ENCODE measurements at regions of chr10 and their contacts with region 1.

Region 1: DNA sequence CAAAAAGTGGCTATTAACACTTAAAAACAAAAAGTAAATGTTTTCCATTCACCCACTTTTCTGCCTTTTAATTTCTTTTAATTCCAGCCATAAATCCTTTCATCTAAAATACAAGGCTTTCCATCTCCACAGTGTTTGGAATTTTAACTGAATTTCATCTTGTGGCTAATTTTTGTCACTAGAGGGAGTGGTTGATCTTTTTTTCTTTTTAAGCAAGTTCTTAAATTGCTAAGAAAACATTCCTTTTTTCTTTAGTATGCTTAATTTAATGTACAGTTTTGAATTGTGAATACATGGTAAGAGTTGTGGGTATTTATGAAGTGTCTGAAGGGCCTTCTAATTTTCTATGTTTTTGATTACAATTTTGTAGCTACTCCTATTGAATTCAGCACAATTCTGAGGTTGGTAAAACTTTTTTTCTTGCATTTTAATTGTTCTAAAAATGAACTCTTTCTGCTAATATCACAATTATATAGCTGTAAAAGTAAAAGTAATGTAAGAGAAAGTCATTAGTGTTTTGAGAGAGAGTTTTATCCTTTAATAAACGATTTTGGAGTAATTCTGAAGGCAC is 54.9 kb upstream of the ANK3 start:
- DNase-seq: peak; percentile 90
- ATAC-seq: no peak
- H3K4me3 ChIP-seq: no peak overlapping the region
- H3K27ac ChIP-seq: no peak overlapping the region
- H3K4me1 ChIP-seq: peaks cover 50% of the 10 kb centered on the region
- H3K27me3 ChIP-seq: no peaks in the 10 kb centered on the region
- CTCF ChIP-seq: peak; percentile 99

Region 2: DNA sequence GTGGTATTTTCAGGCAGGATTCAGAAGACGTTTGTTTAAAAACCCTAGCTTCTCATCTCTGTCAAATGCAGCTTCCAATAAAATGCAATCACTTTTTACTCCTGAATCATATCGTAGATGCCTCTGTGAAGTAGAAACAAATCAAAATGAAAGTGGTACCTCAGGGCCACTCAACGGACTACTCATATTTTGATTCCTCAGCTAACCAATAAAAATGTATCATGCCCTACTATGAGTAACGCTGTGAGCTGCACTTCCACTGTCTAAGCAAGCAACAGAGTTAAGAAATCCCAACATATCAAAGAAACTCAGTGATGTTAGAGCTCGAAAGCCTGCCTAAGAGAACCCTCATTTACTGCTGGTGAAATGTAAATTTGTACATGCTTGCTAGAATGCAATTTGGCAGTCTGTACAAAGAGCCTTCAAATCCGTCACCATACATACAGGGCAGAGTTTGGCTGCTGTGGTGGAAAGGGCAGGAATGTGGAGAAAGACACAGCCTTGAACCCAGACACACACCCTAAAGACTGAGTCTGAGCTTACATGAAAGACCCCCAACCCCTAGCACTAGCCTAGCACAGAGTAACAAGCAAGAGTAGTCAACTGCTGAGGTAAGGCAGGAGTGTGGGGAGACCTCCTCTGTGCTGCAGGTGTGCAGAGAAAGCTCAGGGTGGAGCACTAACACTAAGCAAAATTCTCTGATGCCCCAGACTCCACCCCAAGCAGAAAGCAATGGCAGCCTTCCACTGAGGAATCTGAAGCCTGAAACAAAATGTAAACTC is 206.4 kb before region 1 on chr10:
- CTCF ChIA-PET with region 1: no interaction called
- POLR2A ChIA-PET with region 1: no interaction called
- intact Hi-C with region 1: loop called (anchors 1 kb)
- DNase-seq: peak; percentile 89
- ATAC-seq: peak; percentile 99
- H3K4me3 ChIP-seq: peak overlapping the region; percentile 66
- H3K27ac ChIP-seq: 0 out of 2 replicates have a peak overlapping the region, but pooled peaks have one; percentile 3
- H3K4me1 ChIP-seq: peaks cover 25% of the 10 kb centered on the region
- H3K27me3 ChIP-seq: no peaks in the 10 kb centered on the region
- CTCF ChIP-seq: peak; percentile 96

Region 3: DNA sequence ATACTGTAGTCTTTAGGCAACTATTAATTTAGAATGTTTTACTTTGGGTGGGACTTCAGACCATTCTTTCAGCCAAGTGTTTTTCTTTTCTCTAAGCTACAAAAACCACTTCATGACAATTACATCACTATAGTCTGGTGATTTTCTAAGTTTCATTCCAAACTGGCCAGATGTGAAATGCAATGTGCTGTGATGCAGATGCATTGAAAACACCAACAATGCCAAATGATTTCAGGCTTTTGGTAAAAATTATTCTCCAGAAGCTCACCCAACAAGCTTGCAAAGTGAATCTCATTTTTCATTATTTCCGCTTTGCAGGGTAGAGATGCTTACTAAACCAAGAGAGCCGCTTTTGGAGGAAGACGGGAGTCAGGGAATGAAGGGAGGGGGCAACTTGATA is 63.5 kb after region 1 on chr10:
- CTCF ChIA-PET with region 1: interaction called, 14 read pairs
- POLR2A ChIA-PET with region 1: no interaction called
- intact Hi-C with region 1: no loop called
- DNase-seq: no peak
- ATAC-seq: no peak
- H3K4me3 ChIP-seq: no peak overlapping the region
- H3K27ac ChIP-seq: no peak overlapping the region
- H3K4me1 ChIP-seq: no peaks in the 10 kb centered on the region
- H3K27me3 ChIP-seq: no peaks in the 10 kb centered on the region
- CTCF ChIP-seq: no peak

Region 4: GRCh38 chr10:60549686-60550085 is 105.1 kb after region 1 on chr10:
- CTCF ChIA-PET with region 1: interaction called, 4 read pairs
- POLR2A ChIA-PET with region 1: no interaction called
- intact Hi-C with region 1: loop called (anchors 1 kb)
- DNase-seq: peak; percentile 89
- ATAC-seq: peak; percentile 99
- H3K4me3 ChIP-seq: no peak overlapping the region
- H3K27ac ChIP-seq: no peak overlapping the region
- H3K4me1 ChIP-seq: no peaks in the 10 kb centered on the region
- H3K27me3 ChIP-seq: no peaks in the 10 kb centered on the region
- CTCF ChIP-seq: peak; percentile 97

Region 5: DNA sequence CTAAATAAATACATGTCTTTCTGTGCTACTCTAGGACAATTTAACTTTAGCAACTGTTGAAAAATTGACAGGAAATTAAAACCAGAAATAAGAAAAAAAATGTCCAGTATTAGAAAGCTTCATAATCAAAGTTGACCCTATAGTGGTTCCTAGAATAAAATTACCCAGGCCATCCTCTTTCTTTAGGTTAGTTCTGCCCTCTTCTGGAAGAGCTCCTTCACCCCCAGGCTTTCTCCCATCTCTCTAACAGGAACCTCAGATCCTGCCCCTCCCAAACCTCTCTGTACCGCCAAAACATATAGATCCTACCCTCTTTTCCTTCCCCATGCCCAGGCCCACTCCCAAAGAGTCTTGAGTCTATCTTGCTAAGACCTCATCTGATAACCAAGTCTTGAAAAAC is 174.3 kb after region 1 on chr10:
- CTCF ChIA-PET with region 1: interaction called, 8 read pairs
- POLR2A ChIA-PET with region 1: no interaction called
- intact Hi-C with region 1: loop called (anchors 1 kb)
- DNase-seq: peak; percentile 55
- ATAC-seq: peak; percentile 81
- H3K4me3 ChIP-seq: no peak overlapping the region
- H3K27ac ChIP-seq: no peak overlapping the region
- H3K4me1 ChIP-seq: peaks cover 15% of the 10 kb centered on the region; the same call in 1 of the 2 replicates
- H3K27me3 ChIP-seq: no peaks in the 10 kb centered on the region
- CTCF ChIP-seq: peak; percentile 69

Region 6: DNA sequence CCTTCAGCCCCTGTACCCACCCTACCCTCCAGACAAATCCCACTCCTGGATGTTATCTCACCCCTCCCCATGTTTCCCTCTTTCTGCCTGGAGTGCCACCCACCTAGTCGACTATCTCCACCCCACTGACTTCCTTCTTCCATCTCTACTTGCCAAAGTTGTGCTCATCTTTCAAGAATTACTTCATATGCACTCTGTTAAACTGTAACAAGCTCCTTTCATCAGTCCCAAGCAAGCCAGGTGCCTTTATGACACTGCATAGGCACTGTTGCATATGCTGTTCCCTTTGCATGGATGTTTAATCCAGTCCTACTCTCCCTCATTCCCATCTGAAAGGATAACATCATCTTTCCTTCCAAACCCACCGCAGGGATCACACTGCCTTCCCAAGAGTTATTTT is 324.8 kb after region 1 on chr10:
- CTCF ChIA-PET with region 1: no interaction called
- POLR2A ChIA-PET with region 1: no interaction called
- intact Hi-C with region 1: loop called (anchors 1 kb)
- DNase-seq: no peak
- ATAC-seq: no peak
- H3K4me3 ChIP-seq: no peak overlapping the region
- H3K27ac ChIP-seq: no peak overlapping the region
- H3K4me1 ChIP-seq: no peaks in the 10 kb centered on the region
- H3K27me3 ChIP-seq: no peaks in the 10 kb centered on the region
- CTCF ChIP-seq: no peak

Measured in PC-3 (cell line).